Activated CD8-positive, alpha-beta memory T cell treated with anti-CD3 and anti-CD28 coated beads, Interleukin-2, amount 10 ng/mL, durations not matched to agents 7 days and 5 days (primary cell): ENCODE measurements at regions of chr9 and their contacts with region 1.

Region 1: GRCh38 chr9:129626079-129626624 is at the start of gene NTMT1:
- DNase-seq: peak; percentile 91
- ATAC-seq: peak; percentile 74
- H3K4me3 Mint-ChIP-seq: peak within 1 kb of the TSS; percentile 80
- H3K27ac Mint-ChIP-seq: peak within 1 kb of the TSS; percentile 93
- H3K4me1 Mint-ChIP-seq: peaks cover 62% of the 10 kb centered on the region
- H3K27me3 Mint-ChIP-seq: peaks cover 8% of the 10 kb centered on the region
- total RNA-seq, gene NTMT1: 37.2 to 46.2 TPM

Region 2: GRCh38 chr9:129139993-129140396 is 486.2 kb before region 1 on chr9:
- CTCF ChIA-PET with region 1: interaction called, 214 read pairs
- DNase-seq: peak; percentile 93
- ATAC-seq: peak; percentile 86
- H3K4me3 Mint-ChIP-seq: peak overlapping the region; percentile 75
- H3K27ac Mint-ChIP-seq: peak overlapping the region; percentile 97
- H3K4me1 Mint-ChIP-seq: peaks cover 45% of the 10 kb centered on the region
- H3K27me3 Mint-ChIP-seq: no peaks in the 10 kb centered on the region

Region 3: DNA sequence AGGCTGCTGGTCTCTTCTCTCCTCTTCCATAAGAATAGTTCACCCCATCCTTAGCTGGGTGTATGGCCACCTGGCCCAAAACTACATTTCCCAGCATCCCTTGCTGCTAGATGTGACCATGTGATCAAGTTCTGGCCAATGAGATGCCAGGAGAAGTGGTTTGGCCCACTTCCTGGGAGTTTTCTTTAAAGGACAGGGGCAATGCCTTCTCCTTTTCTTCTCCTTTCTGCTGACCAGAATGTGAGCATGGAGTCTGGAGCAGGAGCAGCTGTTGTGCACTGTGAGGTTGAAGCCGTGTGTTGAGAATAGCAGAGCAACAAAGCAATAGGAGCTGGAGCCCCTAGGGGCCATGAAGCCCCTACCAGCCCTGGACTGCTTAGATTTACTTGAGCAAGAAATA is 42.0 kb before region 1 on chr9:
- CTCF ChIA-PET with region 1: interaction called, 10 read pairs
- DNase-seq: peak; percentile 86
- ATAC-seq: peak; percentile 59
- H3K4me3 Mint-ChIP-seq: no peak overlapping the region
- H3K27ac Mint-ChIP-seq: peak overlapping the region; percentile 85
- H3K4me1 Mint-ChIP-seq: peaks cover 67% of the 10 kb centered on the region
- H3K27me3 Mint-ChIP-seq: peaks cover 5% of the 10 kb centered on the region

Region 4: DNA sequence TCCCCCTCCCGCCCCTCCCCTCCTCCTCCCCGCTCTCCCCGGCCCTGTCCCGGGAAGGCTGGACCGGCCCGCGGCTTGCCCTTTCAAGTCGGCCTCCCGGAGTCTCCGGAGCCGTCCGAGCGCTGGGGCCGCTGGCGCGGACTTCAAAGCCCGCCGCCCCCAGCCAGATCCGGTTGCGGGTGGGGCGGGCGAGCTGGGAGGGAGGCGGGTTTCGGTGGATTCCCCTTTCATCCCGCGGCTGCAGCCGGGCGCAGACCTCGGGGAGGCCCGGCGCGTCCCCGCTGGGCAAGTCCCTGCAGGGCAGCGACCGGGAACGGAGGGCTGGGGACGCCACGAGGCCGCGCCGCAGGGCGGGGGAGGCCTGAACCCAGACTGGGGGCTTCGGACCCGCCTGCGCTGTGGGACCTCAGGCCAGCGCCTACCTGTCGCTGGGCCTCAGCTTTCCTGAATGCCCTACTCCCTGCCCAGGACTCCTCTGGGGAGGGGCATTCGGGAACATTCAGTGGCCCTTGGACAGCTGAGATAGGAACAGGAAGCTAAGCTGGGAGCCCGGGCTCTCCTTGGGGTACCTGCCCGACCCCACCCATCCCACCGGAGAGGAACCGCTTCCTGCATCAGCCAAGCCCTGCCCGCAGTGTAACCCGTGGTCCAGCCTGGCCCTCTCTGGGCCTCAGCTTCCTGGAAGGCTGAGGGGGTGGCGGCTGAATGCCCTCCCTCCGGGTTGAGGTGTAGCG is 28.6 kb before region 1 on chr9:
- CTCF ChIA-PET with region 1: interaction called, 13 read pairs
- DNase-seq: peak; percentile 76
- ATAC-seq: peak; percentile 77
- H3K4me3 Mint-ChIP-seq: peak overlapping the region; percentile 47
- H3K27ac Mint-ChIP-seq: peak overlapping the region; percentile 73
- H3K4me1 Mint-ChIP-seq: peaks cover 31% of the 10 kb centered on the region
- H3K27me3 Mint-ChIP-seq: peaks cover 15% of the 10 kb centered on the region

Region 5: DNA sequence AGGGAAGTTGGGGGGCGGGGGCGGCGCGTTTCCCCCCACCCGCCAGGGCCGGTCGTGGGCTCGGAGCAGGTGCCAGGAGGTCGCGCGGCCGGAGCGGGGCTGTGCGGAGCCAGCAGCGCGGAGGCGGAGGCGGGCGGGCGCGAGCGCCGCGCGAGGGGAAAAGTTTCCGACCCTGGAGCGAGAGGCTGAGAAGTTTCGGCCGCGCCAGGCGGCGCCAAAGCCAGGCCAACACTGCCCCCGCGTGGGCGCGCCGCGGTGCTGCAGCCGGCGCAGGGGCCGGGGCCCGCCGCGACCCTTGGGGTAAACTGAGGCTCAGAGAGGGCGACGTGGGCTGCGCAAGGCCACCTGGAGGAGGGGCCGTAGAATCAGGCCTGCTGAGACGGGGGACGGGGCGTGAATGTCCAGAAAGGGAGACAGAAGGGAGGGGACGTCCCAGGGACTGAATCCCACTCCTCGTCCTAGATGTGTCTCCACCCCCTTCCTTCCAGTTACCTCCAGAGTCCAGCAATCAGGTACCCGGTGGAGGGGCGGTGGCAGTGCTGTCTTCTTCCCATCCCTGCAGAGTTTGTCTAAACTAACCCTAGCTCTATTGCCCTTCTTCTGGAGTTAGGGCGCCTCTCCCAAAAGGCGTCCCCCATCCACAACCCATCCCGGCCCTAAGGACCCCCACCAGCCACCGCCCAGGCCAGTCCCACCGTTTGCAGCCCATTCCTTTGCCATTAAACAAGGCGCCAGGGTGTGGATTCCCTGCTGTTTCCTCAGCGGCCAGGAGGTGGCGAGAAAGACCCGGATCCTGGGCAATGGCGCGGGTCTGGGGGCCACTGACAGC is 15.5 kb before region 1 on chr9:
- CTCF ChIA-PET with region 1: interaction called, 73 read pairs
- DNase-seq: peak; percentile 78
- ATAC-seq: peak; percentile 77
- H3K4me3 Mint-ChIP-seq: peak overlapping the region; percentile 53
- H3K27ac Mint-ChIP-seq: peak overlapping the region; percentile 69
- H3K4me1 Mint-ChIP-seq: peaks cover 39% of the 10 kb centered on the region
- H3K27me3 Mint-ChIP-seq: peaks cover 4% of the 10 kb centered on the region

Region 6: DNA sequence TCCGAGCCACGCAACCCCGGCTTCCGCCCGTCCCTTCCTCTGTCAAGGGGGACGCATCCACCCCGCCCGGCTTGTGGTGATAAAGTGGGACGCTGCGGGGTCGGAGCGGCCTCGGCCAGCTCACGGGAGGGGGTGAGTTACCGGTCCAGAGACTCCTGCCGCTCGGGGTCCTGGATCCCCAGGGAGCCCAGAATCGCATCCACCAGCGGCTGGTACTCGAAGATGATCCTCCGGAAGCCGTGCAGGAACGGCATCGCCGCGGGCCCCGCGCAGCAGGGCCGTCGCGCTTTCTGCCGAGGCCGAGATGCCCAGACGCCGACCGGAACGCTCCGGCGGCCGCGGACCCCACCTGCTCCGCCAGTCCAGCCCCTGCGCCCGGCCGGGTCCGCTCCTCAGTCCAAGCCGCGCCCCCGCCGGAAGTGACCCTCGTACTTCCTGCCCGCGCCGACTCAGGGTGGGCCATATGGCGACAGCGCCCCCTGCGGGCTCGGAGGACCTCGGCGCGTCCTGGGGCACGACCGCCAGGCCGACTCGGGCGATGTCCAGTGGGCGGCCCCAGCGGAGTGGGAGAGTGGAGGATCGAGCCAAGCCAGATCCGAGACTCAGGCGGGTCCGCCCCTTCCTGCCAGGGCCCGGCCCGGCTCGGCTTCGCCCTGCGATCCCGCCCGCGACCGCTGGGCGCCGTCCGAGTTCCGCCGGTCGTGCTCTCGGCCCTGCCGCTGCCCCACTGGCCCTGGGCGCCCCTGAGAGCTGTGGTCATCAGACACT is 15.8 kb after region 1 on chr9 and contains the start of gene ASB6:
- CTCF ChIA-PET with region 1: interaction called, 48 read pairs
- DNase-seq: peak; percentile 95
- ATAC-seq: peak; percentile 94
- H3K4me3 Mint-ChIP-seq: peak within 1 kb of the TSS; percentile 83
- H3K27ac Mint-ChIP-seq: peak within 1 kb of the TSS; percentile 83
- H3K4me1 Mint-ChIP-seq: peaks cover 21% of the 10 kb centered on the region
- H3K27me3 Mint-ChIP-seq: no peaks in the 10 kb centered on the region
- total RNA-seq, gene ASB6: 25.0 to 26.4 TPM

Region 7: DNA sequence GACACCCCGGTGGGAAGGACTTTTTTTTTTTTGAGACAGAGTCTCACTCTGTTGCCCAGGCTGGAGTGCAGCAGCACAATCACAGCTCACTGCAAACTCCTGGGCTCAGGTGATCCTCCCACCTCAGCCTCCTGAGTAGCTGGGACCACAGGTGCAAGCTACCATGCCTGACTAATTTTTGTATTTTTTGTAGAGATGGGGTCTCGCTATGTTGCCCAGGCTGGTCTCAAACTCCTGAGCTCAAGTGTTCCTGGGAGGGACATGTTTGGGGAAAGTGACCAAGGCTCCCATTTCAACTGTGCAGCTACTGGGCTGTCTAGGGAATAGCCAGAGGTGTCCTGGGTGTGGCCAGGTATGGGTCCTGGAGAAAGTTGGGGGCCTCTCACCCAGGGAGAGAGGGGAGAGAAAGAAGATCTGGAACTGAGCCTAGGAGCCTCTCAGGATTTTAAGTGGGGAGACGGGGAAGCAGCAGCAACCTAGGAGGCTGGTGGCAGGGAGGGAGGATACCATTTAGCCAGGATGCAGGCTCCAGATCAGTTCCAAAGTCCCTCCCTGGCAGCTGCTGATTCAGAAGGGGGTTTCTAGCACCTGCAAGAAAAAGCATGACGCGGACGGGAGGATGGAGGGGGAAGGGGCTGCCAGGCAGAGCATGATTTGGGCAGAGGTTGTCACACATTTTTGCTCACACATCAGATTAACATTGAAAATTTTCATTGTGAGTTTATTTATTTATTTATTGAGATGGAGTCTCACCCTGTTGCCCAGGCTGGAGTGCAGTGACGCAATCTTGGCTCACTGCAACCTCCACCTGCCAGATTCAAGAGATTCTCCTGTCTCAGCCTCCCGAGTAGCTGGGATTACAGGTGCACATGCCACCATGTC is 170.1 kb after region 1 on chr9:
- CTCF ChIA-PET with region 1: interaction called, 12 read pairs
- DNase-seq: no peak
- ATAC-seq: no peak
- H3K4me3 Mint-ChIP-seq: no peak overlapping the region
- H3K27ac Mint-ChIP-seq: no peak overlapping the region
- H3K4me1 Mint-ChIP-seq: peaks cover 3% of the 10 kb centered on the region
- H3K27me3 Mint-ChIP-seq: peaks cover 12% of the 10 kb centered on the region